Psoas muscle (tissue), 8 donors: ENCODE measurements at regions of chr10 and their contacts with region 1.

Region 1: DNA sequence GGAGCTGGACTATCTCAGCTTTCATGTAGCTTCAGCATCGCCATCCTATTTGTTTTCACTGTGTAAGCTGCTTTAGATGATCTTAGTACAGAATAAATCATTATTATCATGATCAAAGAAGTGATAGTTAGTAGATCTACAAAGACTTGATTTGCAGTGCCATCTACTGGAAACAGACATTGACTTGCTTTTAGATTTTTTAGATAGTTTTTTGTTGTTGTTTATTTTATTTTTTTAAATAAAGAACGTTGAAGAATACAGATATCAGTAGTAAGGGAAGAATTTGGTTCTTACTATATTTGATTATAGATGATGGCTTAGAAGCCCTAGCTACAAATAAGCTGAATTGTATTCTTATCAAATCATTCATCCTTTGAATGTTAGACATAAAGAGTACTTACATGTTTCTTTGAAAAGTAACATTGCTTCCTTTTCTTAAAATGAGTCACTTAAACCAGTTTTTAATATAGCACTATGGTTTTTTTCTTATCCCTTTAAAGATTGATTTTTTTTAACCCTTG is 6.3 kb upstream of the SFMBT2 start:
- DNase-seq: no peak
- ATAC-seq: no peak
- H3K4me3 ChIP-seq: no peak overlapping the region
- H3K27ac ChIP-seq: no peak overlapping the region
- H3K4me1 ChIP-seq: peaks cover 4% of the 10 kb centered on the region
- H3K27me3 ChIP-seq: peaks cover under 1 to 8% (median 3%) of the 10 kb centered on the region in 3 donors
- CTCF ChIP-seq: peak; percentile 55

Region 2: GRCh38 chr10:6920072-6921019 is 496.8 kb before region 1 on chr10:
- intact Hi-C with region 1: loop called (anchors 5 to 10 kb)
- DNase-seq: peak; percentile 61 to 79
- ATAC-seq: peak; percentile 74 to 92 (median 90)
- H3K4me3 ChIP-seq: no peak overlapping the region
- H3K27ac ChIP-seq: no peak overlapping the region
- H3K4me1 ChIP-seq: no peaks in the 10 kb centered on the region
- H3K27me3 ChIP-seq: no peaks in the 10 kb centered on the region
- CTCF ChIP-seq: peak; percentile 62

Region 3: GRCh38 chr10:7121154-7121810 is 295.9 kb before region 1 on chr10:
- intact Hi-C with region 1: loop called in 1 of 2 experiments (anchors 5 kb)
- DNase-seq: peak in 1 of 2 donors; percentile 36
- ATAC-seq: peak in 1 of 4 donors; percentile 45
- H3K4me3 ChIP-seq: no peak overlapping the region
- H3K27ac ChIP-seq: no peak overlapping the region
- H3K4me1 ChIP-seq: no peaks in the 10 kb centered on the region
- H3K27me3 ChIP-seq: peaks cover 0 to 5% (median 0%) of the 10 kb centered on the region in 3 donors
- CTCF ChIP-seq: peak; percentile 32

Region 4: DNA sequence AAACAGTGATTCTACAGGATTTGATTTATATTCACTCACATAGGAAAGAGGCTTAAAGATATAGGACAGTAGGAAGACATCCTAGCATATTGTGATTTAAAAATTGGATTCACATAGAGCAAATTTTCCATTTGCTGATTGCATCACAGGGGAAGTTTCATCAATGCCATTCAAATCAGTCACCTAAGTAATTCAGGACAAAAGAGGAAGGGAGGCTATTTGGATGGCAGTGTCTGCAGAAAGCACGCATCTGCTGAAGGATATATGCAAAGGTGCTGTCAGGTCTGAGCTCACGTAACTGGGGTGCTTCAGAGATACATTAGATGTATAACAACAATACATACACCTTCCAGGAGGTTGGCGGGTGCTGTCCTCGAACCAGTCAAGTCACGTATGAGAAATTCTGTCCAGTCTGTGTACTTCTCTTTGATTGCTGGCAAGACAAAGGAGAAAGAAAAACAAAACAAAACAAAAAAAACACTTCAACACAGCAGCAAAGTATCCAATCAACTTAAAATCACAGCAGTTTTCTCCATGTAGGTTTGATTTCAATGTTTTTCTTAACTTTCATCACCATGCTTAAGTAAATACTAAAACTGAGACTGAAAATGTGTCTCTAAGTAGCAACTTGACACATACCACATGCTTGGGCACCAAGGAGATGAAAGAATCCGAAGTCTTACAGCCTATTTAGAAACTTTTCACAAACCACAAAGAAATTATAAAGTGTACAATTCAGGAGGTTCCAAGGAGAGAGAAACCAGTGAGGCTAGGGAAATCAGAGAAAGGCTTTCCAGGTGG is 131.4 kb before region 1 on chr10:
- intact Hi-C with region 1: no loop called
- DNase-seq: no peak
- ATAC-seq: no peak
- H3K4me3 ChIP-seq: no peak overlapping the region
- H3K27ac ChIP-seq: no peak overlapping the region
- H3K4me1 ChIP-seq: no peaks in the 10 kb centered on the region
- H3K27me3 ChIP-seq: no peaks in the 10 kb centered on the region
- CTCF ChIP-seq: no peak

Region 5: DNA sequence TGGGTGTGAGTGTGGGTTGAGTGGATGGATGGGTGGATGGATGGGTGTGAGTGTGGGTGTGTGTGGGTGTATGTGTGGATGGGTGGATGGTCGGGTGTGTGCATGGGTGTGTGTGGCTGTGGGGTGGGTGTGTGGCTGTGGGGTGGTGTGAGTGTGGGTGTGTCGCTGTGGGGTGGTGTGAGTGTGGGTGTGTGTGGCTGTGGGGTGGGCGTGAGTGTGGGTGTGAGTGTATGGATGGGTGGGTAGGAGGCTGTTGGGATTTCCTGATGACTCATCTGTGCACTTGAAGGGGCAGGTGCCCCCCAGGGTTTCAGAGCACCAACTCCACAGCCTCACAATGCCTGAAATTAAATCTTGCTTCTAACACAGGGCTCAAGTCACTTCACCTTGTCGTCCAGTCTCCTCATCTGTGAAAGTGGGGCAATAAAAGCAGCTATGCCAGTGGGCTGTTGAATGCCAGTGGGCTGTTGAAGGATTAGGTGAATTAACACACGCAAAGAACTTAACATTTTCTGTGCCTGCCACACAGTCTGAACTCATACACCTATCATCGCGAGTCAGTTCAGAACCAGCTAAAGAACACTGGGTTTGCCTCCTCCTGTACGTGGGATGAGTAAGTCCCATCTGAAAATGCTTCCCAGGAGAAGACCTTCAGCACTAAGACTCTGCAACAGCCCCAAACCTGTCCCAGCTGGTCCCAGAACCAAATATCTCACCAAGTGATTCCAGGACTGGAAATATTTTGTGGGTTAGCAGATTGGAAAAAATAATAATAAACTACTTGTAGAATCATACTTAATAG is 38.4 kb before region 1 on chr10:
- intact Hi-C with region 1: no loop called
- DNase-seq: no peak
- ATAC-seq: no peak
- H3K4me3 ChIP-seq: no peak overlapping the region
- H3K27ac ChIP-seq: no peak overlapping the region
- H3K4me1 ChIP-seq: no peaks in the 10 kb centered on the region
- H3K27me3 ChIP-seq: no peaks in the 10 kb centered on the region
- CTCF ChIP-seq: no peak